AG04450 (cell line): ENCODE measurements at regions of chr13 and their contacts with region 1.

Region 1: DNA sequence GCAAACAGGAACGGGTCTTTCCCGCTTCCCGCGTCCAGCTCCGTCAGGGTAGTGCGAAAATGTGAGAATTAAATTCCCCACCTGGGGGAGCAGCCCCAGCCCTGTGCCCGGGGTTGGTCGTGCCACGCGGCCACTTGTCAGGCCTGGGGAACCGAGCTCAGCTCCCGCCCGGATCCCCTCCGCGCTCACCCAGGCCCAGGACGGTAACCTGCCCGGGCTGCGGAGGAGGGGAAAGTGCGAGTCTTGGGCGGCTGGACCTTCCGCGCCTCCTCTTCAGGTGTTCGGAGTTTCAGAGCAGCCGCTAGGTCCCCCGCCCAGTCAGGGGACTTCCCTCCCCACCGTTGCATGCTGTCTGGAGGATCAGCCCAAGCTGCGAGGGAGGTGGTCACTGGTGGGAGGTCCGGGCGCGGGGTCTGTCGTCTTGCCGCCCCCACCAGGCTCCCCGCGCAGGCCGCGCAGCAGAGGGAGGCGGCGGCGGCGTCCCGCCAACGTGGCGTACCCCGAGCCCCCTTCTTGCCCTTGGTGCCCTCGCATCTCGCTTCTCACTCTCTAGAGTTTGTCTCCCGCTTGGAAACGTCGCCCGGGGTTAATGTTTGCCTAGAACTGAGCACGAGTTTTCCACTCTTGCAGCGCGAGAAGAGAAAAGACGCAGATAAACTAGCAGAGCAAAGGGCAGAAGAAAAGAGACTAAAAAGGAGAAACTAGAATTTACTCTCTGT is 8.1 kb downstream of the URAD start:
- DNase-seq: no peak
- H3K4me3 ChIP-seq: no peak overlapping the region
- H3K27ac ChIP-seq: no peak overlapping the region
- H3K27me3 ChIP-seq: peaks cover 69% of the 10 kb centered on the region
- CTCF ChIP-seq: no peak

Region 2: GRCh38 chr13:27868641-27869435 is 111.6 kb before region 1 on chr13:
- CTCF ChIA-PET with region 1: interaction called, 46 read pairs
- POLR2A ChIA-PET with region 1: no interaction called
- DNase-seq: no peak
- H3K4me3 ChIP-seq: no peak overlapping the region
- H3K27ac ChIP-seq: no peak overlapping the region
- H3K27me3 ChIP-seq: peaks cover 2% of the 10 kb centered on the region
- CTCF ChIP-seq: peak; percentile 64

Region 3: GRCh38 chr13:27953676-27954405 is 26.6 kb before region 1 on chr13:
- CTCF ChIA-PET with region 1: interaction called, 24 read pairs
- POLR2A ChIA-PET with region 1: no interaction called
- DNase-seq: peak; percentile 10
- H3K4me3 ChIP-seq: peak overlapping the region; percentile 53
- H3K27ac ChIP-seq: no peak overlapping the region
- H3K27me3 ChIP-seq: peaks cover 51% of the 10 kb centered on the region
- CTCF ChIP-seq: peak; percentile 73

Region 4: GRCh38 chr13:27997904-27998522 is 17.6 kb after region 1 on chr13:
- CTCF ChIA-PET with region 1: interaction called, 18 read pairs
- POLR2A ChIA-PET with region 1: no interaction called
- DNase-seq: no peak
- H3K4me3 ChIP-seq: no peak overlapping the region
- H3K27ac ChIP-seq: no peak overlapping the region
- H3K27me3 ChIP-seq: peaks cover 3% of the 10 kb centered on the region
- CTCF ChIP-seq: peak; percentile 64